IMR-90 (cell line): ENCODE measurements at regions of chr6 and their contacts with region 1.

Region 1: GRCh38 chr6:109705258-109705657 is 14.2 kb downstream of the FIG4 start:
- DNase-seq: peak; percentile 88
- ATAC-seq: peak; percentile 98
- H3K4me3 ChIP-seq: no peak overlapping the region
- H3K27ac ChIP-seq: no peak overlapping the region
- H3K4me1 ChIP-seq: no peaks in the 10 kb centered on the region
- H3K27me3 ChIP-seq: no peaks in the 10 kb centered on the region
- CTCF ChIP-seq: peak; percentile 100; the same call in 1 of the 2 replicates
- POLR2A ChIP-seq: peak; percentile 68; the same call in 1 of the 2 replicates
- RAD21 ChIP-seq: peak; percentile 100

Region 2: GRCh38 chr6:109759098-109759955 is 54.1 kb after region 1 on chr6:
- CTCF ChIA-PET with region 1: no interaction called
- POLR2A ChIA-PET with region 1: no interaction called
- dilution Hi-C with region 1: no loop called
- in situ Hi-C with region 1: no loop called
- intact Hi-C with region 1: no loop called
- DNase-seq: no peak
- ATAC-seq: no peak
- H3K4me3 ChIP-seq: no peak overlapping the region
- H3K27ac ChIP-seq: no peak overlapping the region
- H3K4me1 ChIP-seq: peaks cover 2% of the 10 kb centered on the region
- H3K27me3 ChIP-seq: no peaks in the 10 kb centered on the region
- CTCF ChIP-seq: no peak
- POLR2A ChIP-seq: no peak
- RAD21 ChIP-seq: no peak

Region 3: GRCh38 chr6:109772961-109773431 is 67.7 kb after region 1 on chr6:
- CTCF ChIA-PET with region 1: no interaction called
- POLR2A ChIA-PET with region 1: no interaction called
- dilution Hi-C with region 1: no loop called
- in situ Hi-C with region 1: no loop called
- intact Hi-C with region 1: no loop called
- DNase-seq: peak; percentile 80
- ATAC-seq: peak; percentile 91
- H3K4me3 ChIP-seq: no peak overlapping the region
- H3K27ac ChIP-seq: peak overlapping the region; percentile 4; the same call in 1 of the 2 replicates
- H3K4me1 ChIP-seq: peaks cover 8% of the 10 kb centered on the region
- H3K27me3 ChIP-seq: no peaks in the 10 kb centered on the region
- CTCF ChIP-seq: no peak
- POLR2A ChIP-seq: no peak
- RAD21 ChIP-seq: no peak

Region 4: DNA sequence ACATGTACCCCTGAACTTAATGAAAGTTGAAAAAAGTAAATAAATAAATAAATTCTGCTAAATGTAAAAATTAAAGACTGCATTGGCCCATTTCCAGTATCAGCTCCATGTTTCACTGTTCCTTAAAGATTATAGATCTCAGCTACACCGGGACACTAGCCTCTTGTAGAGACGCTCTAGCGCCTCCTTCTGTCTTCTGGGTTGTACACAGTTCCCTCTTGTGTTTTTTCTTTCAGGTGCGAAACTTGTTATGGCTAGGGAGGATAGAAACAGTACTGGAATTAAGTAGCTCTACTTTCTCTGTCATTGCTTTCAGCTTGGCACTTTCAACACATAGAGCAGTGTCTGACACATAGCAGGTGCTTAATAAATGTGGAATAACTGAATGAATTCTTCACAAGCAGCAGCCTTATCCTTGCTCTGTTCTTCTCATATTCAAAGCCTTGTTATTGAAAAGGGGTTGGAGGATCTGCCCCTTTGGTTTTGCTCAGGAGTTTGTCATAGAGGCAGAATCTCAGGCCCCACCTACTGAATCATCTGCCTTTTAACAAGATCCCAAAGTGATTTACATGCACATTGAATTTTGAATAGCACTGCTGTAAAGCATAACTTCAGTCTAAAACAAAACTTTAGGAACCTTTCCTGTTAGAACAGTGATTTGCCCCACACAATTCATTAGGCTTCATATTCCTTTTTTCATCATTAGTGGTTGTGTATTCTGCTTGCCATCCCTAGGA is 78.2 kb after region 1 on chr6:
- CTCF ChIA-PET with region 1: interaction called, 10 read pairs
- POLR2A ChIA-PET with region 1: no interaction called
- dilution Hi-C with region 1: no loop called
- in situ Hi-C with region 1: no loop called
- intact Hi-C with region 1: loop called (anchors 1 kb)
- DNase-seq: peak; percentile 29
- ATAC-seq: peak; percentile 44
- H3K4me3 ChIP-seq: no peak overlapping the region
- H3K27ac ChIP-seq: no peak overlapping the region
- H3K4me1 ChIP-seq: peaks cover 2% of the 10 kb centered on the region; the same call in 1 of the 2 replicates
- H3K27me3 ChIP-seq: no peaks in the 10 kb centered on the region
- CTCF ChIP-seq: peak; percentile 38
- POLR2A ChIP-seq: no peak
- RAD21 ChIP-seq: peak; percentile 29; the same call in 1 of the 2 replicates

Region 5: GRCh38 chr6:110053395-110054240 is 348.4 kb after region 1 on chr6:
- CTCF ChIA-PET with region 1: interaction called, 3 read pairs
- POLR2A ChIA-PET with region 1: no interaction called
- dilution Hi-C with region 1: loop called (anchors 25 kb)
- in situ Hi-C with region 1: no loop called
- intact Hi-C with region 1: loop called (anchors 1 kb)
- DNase-seq: peak; percentile 68
- ATAC-seq: peak; percentile 79
- H3K4me3 ChIP-seq: no peak overlapping the region
- H3K27ac ChIP-seq: no peak overlapping the region
- H3K4me1 ChIP-seq: no peaks in the 10 kb centered on the region
- H3K27me3 ChIP-seq: peaks cover 29% of the 10 kb centered on the region
- CTCF ChIP-seq: peak; percentile 91
- POLR2A ChIP-seq: no peak
- RAD21 ChIP-seq: peak; percentile 80

Region 6: GRCh38 chr6:110083875-110084585 is 378.8 kb after region 1 on chr6:
- CTCF ChIA-PET with region 1: no interaction called
- POLR2A ChIA-PET with region 1: no interaction called
- dilution Hi-C with region 1: no loop called
- in situ Hi-C with region 1: no loop called
- intact Hi-C with region 1: no loop called
- DNase-seq: no peak
- ATAC-seq: no peak
- H3K4me3 ChIP-seq: no peak overlapping the region
- H3K27ac ChIP-seq: no peak overlapping the region
- H3K4me1 ChIP-seq: no peaks in the 10 kb centered on the region
- H3K27me3 ChIP-seq: no peaks in the 10 kb centered on the region; the same call in 1 of the 2 replicates
- CTCF ChIP-seq: no peak
- POLR2A ChIP-seq: no peak
- RAD21 ChIP-seq: no peak

Region 7: DNA sequence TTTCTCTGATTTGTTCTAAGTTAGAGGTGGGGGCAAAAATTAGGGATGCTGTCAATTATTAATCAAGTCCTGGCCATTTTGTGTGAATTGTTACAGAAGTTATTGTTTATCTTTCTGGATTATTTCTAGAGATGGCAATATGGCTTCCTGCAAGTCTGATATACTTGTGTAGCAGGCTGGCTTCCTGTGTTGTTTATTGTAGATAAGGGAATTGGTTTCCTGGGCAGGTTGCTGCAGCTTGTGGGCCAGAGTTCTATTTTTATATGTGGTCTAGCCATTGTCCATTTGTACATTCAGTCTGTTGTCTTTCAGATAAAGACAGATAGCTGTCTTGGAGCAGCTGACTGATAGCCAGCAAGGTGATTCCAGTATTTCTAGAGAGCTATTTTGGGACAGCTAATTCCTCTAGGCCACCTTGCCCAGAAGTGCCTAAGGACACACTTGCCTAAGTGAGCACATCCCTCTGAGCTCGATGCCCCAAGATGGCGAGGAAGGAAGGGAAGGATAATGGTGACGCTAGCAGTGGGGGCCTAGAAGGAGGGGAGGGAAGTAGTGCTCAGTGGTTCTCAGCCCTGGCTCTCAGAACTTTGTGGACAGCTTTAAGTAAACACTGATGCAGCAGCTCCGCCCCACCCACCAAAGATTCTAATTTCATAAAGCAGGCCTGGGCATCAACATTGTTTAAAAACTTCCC is 684.6 kb after region 1 on chr6:
- CTCF ChIA-PET with region 1: no interaction called
- POLR2A ChIA-PET with region 1: no interaction called
- dilution Hi-C with region 1: no loop called
- in situ Hi-C with region 1: loop called (anchors 5 kb)
- intact Hi-C with region 1: loop called (anchors 1 kb)
- DNase-seq: no peak
- ATAC-seq: no peak
- H3K4me3 ChIP-seq: no peak overlapping the region
- H3K27ac ChIP-seq: no peak overlapping the region
- H3K4me1 ChIP-seq: no peaks in the 10 kb centered on the region
- H3K27me3 ChIP-seq: peaks cover 6% of the 10 kb centered on the region
- CTCF ChIP-seq: no peak
- POLR2A ChIP-seq: no peak
- RAD21 ChIP-seq: no peak